ENCODE measurements at regions of chr3 and their contacts with region 1.

Region 1: DNA sequence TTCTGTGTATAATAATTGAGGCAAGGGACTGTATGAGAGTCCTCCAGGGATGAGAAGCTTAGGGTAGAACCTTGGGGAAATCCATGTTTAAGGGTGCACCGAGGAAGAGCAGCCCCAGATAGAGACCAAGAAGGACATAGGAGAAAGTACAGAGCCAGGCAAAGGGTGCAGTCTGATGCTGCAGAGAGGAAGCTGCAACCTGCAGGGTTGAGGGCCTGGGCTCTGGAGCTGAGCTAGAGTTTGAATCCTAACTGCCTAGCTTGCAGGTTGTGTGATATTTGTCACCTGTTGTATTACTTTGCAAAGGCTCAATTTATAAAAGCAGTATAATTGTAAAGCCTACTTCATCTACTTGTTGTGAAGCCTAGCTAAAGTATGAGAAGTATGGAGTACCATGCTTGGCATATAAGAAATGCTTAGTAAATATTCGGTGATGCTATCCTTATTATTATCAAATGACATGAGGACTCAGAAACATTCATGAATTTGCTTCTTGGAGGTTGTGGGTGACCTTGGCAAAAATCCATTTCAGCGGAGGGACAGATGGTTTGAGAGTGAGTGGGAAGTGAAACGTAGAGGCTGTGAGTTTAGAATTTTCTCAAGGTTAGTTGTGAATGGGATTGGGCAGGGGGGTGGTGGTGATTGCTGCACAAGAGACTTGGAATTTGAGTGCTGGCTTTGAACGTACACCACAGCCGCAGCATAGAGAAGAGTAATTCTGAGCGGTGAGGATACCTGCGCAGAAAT is 43.8 kb downstream of the PLCL2 start:
- DNase-seq: no peak
- ATAC-seq: no peak
- H3K4me3 ChIP-seq: no peak overlapping the region
- H3K4me3 Mint-ChIP-seq: peak overlapping the region; percentile 32
- H3K27ac ChIP-seq: no peak overlapping the region
- H3K27ac Mint-ChIP-seq: peak overlapping the region; percentile 11
- H3K4me1 ChIP-seq: peaks cover 27% of the 10 kb centered on the region
- H3K4me1 Mint-ChIP-seq: peaks cover 84% of the 10 kb centered on the region
- H3K27me3 ChIP-seq: no peaks in the 10 kb centered on the region
- H3K27me3 Mint-ChIP-seq: no peaks in the 10 kb centered on the region
- CTCF ChIP-seq: no peak

Region 2: GRCh38 chr3:16961621-16962205 is 33.2 kb after region 1 on chr3:
- CTCF ChIA-PET with region 1: no interaction called
- POLR2A ChIA-PET with region 1: no interaction called
- intact Hi-C with region 1: loop called in 1 of 2 experiments (anchors 5 kb)
- DNase-seq: no peak
- ATAC-seq: no peak
- H3K4me3 ChIP-seq: no peak overlapping the region
- H3K4me3 Mint-ChIP-seq: no peak overlapping the region
- H3K27ac ChIP-seq: no peak overlapping the region
- H3K27ac Mint-ChIP-seq: peak overlapping the region; percentile 41
- H3K4me1 ChIP-seq: peaks cover 6% of the 10 kb centered on the region
- H3K4me1 Mint-ChIP-seq: peaks cover 56% of the 10 kb centered on the region
- H3K27me3 ChIP-seq: no peaks in the 10 kb centered on the region
- H3K27me3 Mint-ChIP-seq: no peaks in the 10 kb centered on the region
- CTCF ChIP-seq: no peak

Region 3: DNA sequence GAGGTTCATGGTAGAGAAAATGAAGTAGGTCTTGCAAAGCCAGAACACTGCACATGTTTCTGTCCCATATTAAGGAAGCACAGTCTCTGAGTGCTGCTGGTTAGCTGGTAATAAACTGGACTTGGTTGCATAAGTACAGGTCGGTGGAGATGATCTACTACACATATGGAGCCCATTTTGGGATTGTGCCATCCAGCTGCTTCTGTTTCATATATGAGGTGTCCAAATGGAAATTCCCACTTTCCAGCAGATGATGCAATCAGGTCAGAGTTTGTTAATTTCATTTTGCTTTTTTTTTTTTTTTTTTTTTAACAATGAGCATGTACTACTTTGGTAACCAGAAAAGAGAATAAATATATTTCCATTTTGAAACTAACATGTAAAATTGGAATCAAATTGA is 1374.0 kb after region 1 on chr3:
- CTCF ChIA-PET with region 1: no interaction called
- POLR2A ChIA-PET with region 1: no interaction called
- intact Hi-C with region 1: no loop called
- DNase-seq: no peak
- ATAC-seq: no peak
- H3K4me3 ChIP-seq: no peak overlapping the region
- H3K4me3 Mint-ChIP-seq: no peak overlapping the region
- H3K27ac ChIP-seq: no peak overlapping the region
- H3K27ac Mint-ChIP-seq: no peak overlapping the region
- H3K4me1 ChIP-seq: no peaks in the 10 kb centered on the region
- H3K4me1 Mint-ChIP-seq: no peaks in the 10 kb centered on the region
- H3K27me3 ChIP-seq: no peaks in the 10 kb centered on the region
- H3K27me3 Mint-ChIP-seq: no peaks in the 10 kb centered on the region
- CTCF ChIP-seq: no peak

Measured in CD4-positive, alpha-beta T cell (primary cell).